ENCODE measurements at regions of chr12 and their contacts with region 1.

Region 1: GRCh38 chr12:54214553-54215406 is 26.0 kb upstream of the SMUG1 start:
- DNase-seq: peak; percentile 86
- ATAC-seq: peak; percentile 87

Region 2: DNA sequence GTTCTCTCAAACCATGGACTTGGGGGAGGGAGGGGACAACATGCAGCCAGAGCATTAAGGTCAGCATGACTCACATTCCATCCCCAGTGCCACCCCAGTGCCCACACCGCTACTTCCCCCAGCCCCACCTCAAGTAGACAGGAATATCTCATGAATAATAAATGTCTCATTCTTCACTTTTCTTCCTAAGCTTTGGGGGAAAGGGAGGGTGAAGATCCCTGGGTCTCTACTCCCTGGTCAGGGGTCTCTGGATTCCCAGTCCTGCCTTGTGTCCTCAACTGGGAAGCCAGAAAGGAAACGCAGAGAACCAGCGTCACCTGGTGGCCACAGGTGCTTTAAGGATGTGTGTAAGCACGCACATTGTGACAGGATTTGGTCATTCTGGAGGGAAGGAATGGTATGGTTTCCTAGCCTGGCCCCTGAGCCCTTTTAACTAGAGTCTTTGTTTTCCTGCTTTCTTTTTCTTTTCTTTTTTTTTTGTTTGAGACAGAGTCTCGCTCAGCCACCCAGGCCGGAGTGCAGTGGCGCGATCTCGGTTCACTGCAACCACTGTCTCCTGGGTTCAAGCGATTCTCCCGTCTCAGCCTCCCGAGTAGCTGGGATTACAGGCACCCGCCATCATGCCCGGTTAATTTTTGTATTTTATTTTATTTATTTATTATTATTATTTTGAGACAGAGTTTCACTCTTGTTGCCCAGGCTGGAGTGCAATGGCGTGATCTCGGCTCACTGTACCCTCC is 146.1 kb after region 1 on chr12:
- intact Hi-C with region 1: loop called (anchors 5 kb)
- DNase-seq: peak; percentile 85
- ATAC-seq: peak; percentile 21